ENCODE measurements at regions of chr11 and their contacts with region 1.

Region 1: GRCh38 chr11:106379718-106380117 is 302.3 kb downstream of the AASDHPPT start:
- DNase-seq: no peak
- ATAC-seq: no peak
- H3K4me3 ChIP-seq: no peak overlapping the region
- H3K27ac ChIP-seq: no peak overlapping the region
- H3K4me1 ChIP-seq: no peaks in the 10 kb centered on the region; the same call in 1 of the 2 replicates
- H3K27me3 ChIP-seq: no peaks in the 10 kb centered on the region
- CTCF ChIP-seq: no peak
- POLR2A ChIP-seq: no peak
- RAD21 ChIP-seq: no peak

Region 2: DNA sequence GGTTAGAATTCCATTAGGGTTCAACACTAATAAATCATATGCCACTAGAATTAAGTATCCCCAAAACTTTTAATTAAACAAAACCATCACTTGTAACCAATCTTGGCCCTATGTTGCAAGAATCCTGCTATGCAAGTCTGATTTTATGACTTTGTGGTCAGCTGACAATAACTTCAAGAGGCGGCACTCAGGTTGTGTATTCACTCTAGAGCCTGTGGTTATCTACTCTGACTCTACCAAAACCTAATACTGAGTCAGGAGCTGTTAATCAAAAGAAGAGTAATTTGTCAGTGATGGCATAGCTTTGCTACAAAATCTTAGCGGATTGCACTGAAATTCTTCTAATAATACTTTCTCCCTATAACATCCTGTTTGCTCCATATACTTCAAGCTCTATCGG is 48.5 kb before region 1 on chr11:
- CTCF ChIA-PET with region 1: no interaction called
- POLR2A ChIA-PET with region 1: no interaction called
- dilution Hi-C with region 1: no loop called
- in situ Hi-C with region 1: no loop called
- intact Hi-C with region 1: no loop called
- DNase-seq: no peak
- ATAC-seq: no peak
- H3K4me3 ChIP-seq: no peak overlapping the region
- H3K27ac ChIP-seq: no peak overlapping the region
- H3K4me1 ChIP-seq: no peaks in the 10 kb centered on the region
- H3K27me3 ChIP-seq: no peaks in the 10 kb centered on the region
- CTCF ChIP-seq: no peak
- POLR2A ChIP-seq: no peak
- RAD21 ChIP-seq: no peak

Region 3: GRCh38 chr11:106369224-106369623 is 10.5 kb before region 1 on chr11:
- CTCF ChIA-PET with region 1: no interaction called
- POLR2A ChIA-PET with region 1: no interaction called
- dilution Hi-C with region 1: no loop called
- in situ Hi-C with region 1: no loop called
- intact Hi-C with region 1: loop called (anchors 2 kb)
- DNase-seq: peak; percentile 14
- ATAC-seq: peak; percentile 7; the same call in 1 of the 2 replicates
- H3K4me3 ChIP-seq: no peak overlapping the region
- H3K27ac ChIP-seq: no peak overlapping the region
- H3K4me1 ChIP-seq: peaks cover 5% of the 10 kb centered on the region; the same call in 1 of the 2 replicates
- H3K27me3 ChIP-seq: no peaks in the 10 kb centered on the region
- CTCF ChIP-seq: no peak
- POLR2A ChIP-seq: no peak
- RAD21 ChIP-seq: no peak

Region 4: DNA sequence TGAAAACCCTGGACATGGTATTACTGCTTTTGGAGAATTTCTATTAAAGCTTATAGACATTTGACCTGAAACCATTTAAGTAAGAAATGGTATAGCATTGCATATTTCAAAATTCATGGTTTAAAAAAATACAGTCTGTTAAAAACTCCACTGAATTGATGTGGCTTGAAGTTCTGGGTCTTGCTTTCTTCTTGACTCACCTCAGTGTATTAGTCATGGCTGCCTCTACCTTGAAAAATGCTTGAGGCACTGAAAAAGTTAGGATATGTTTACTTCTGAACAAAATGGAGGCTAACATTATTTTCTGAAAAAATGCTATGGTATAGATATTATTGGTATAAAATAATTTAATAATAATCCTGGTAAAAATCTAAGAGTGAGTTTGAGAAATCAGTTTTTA is 47.0 kb after region 1 on chr11:
- CTCF ChIA-PET with region 1: no interaction called
- POLR2A ChIA-PET with region 1: no interaction called
- dilution Hi-C with region 1: no loop called
- in situ Hi-C with region 1: no loop called
- intact Hi-C with region 1: loop called (anchors 5 kb)
- DNase-seq: no peak
- ATAC-seq: no peak
- H3K4me3 ChIP-seq: no peak overlapping the region
- H3K27ac ChIP-seq: no peak overlapping the region
- H3K4me1 ChIP-seq: peaks cover 3% of the 10 kb centered on the region
- H3K27me3 ChIP-seq: no peaks in the 10 kb centered on the region
- CTCF ChIP-seq: no peak
- POLR2A ChIP-seq: no peak
- RAD21 ChIP-seq: no peak

Region 5: GRCh38 chr11:106482917-106483785 is 103.4 kb after region 1 on chr11:
- CTCF ChIA-PET with region 1: no interaction called
- POLR2A ChIA-PET with region 1: no interaction called
- dilution Hi-C with region 1: no loop called
- in situ Hi-C with region 1: no loop called
- intact Hi-C with region 1: loop called (anchors 5 kb)
- DNase-seq: peak; percentile 84
- ATAC-seq: peak; percentile 77
- H3K4me3 ChIP-seq: no peak overlapping the region
- H3K27ac ChIP-seq: peak overlapping the region; percentile 28; the same call in 1 of the 2 replicates
- H3K4me1 ChIP-seq: peaks cover 4% of the 10 kb centered on the region; the same call in 1 of the 2 replicates
- H3K27me3 ChIP-seq: no peaks in the 10 kb centered on the region
- CTCF ChIP-seq: no peak
- POLR2A ChIP-seq: no peak
- RAD21 ChIP-seq: no peak

Measured in IMR-90 (cell line).